ENCODE measurements at regions of chr12 and their contacts with region 1.

Region 1: GRCh38 chr12:109713187-109713984 is at the start of gene FAM222A:
- DNase-seq: peak; percentile 97 to 98
- ATAC-seq: peak; percentile 85 to 96 (median 85)
- H3K4me3 ChIP-seq: peak within 1 kb of the TSS; percentile 53
- H3K4me3 Mint-ChIP-seq: peak within 1 kb of the TSS; percentile 84
- H3K27ac ChIP-seq: no peak within 1 kb of the TSS
- H3K27ac Mint-ChIP-seq: peak within 1 kb of the TSS in 1 of 2 donors; percentile 29
- H3K4me1 ChIP-seq: peaks cover 9% of the 10 kb centered on the region
- H3K4me1 Mint-ChIP-seq: no peaks in the 10 kb centered on the region
- H3K27me3 ChIP-seq: peaks cover 17% of the 10 kb centered on the region
- H3K27me3 Mint-ChIP-seq: peaks cover 25 to 31% of the 10 kb centered on the region in 2 donors
- CTCF ChIP-seq: no peak
- total RNA-seq, gene FAM222A: 3.1 to 6.6 (median 4.0) TPM

Region 2: GRCh38 chr12:109573029-109573913 is 140.1 kb before region 1 on chr12 and contains the starts of genes MMAB and MVK:
- intact Hi-C with region 1: loop called (anchors 2 kb)
- DNase-seq: peak; percentile 97 to 99
- ATAC-seq: peak; percentile 88 to 95 (median 94)
- H3K4me3 ChIP-seq: peak within 1 kb of the TSS; percentile 63
- H3K4me3 Mint-ChIP-seq: peak within 1 kb of the TSS; percentile 95
- H3K27ac ChIP-seq: peak within 1 kb of the TSS; percentile 88
- H3K27ac Mint-ChIP-seq: peak within 1 kb of the TSS; percentile 96 to 99
- H3K4me1 ChIP-seq: peaks cover 21% of the 10 kb centered on the region
- H3K4me1 Mint-ChIP-seq: peaks cover 27 to 29% of the 10 kb centered on the region in 2 donors
- H3K27me3 ChIP-seq: no peaks in the 10 kb centered on the region
- H3K27me3 Mint-ChIP-seq: no peaks in the 10 kb centered on the region
- CTCF ChIP-seq: no peak
- total RNA-seq, gene MMAB: 17.1 to 18.3 (median 17.6) TPM
- total RNA-seq, gene MVK: 9.4 to 16.6 (median 16.2) TPM

Measured in natural killer cell (primary cell).